ENCODE measurements at regions of chr3 and their contacts with region 1.

Region 1: DNA sequence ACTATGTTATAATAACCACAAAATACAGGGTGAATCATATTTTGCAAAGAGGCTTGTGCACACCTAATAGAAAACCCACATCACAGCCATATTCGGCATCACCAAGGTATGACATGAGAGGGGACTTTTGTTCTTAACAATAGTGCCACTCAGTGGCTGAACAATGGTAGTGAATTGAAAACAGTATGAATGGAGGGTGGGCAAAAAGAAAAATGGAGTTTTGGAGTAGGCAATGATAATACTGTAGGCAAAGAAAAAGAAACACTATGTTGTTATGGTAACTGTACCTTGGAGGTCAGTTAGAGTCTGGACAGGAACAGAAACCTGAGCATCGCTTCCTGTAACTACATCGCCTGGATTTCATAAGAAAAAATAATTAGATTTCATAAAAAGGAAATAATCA is 348.6 kb downstream of the PLCL2 start:
- DNase-seq: peak; percentile 43
- ATAC-seq: peak; percentile 99
- H3K4me3 Mint-ChIP-seq: no peak overlapping the region
- H3K27ac Mint-ChIP-seq: no peak overlapping the region
- H3K4me1 Mint-ChIP-seq: peaks cover 28% of the 10 kb centered on the region
- H3K27me3 Mint-ChIP-seq: no peaks in the 10 kb centered on the region
- CTCF ChIP-seq: peak; percentile 78

Region 2: DNA sequence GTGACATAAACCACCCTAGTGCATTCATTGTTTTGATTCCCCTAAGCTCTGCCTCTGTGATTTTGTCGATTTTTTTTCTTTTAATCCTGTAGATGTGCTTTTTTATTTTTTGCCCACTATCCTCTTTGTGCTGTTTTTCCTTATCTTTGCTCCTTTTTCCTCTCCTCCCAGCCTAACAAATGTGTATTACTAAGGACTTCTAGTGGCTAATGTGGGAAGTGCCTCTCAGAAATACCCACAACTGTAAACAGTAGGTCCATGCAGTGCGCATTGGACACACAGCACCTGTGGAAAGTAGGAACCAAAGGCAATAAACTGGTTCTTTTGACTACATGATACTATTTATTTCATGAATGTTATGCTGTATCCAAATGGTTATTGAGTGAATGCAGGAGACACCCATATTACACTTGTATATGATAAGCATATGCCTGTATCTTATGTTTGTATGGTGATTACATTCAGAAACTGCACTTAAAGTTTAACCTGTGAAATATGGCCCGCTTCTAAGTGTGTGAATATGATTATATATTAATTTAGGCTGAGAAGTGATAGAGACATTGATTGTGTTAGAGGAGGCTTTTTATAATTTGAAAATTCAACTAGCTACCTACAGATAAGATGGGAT is 200.9 kb before region 1 on chr3:
- CTCF ChIA-PET with region 1: interaction called, 3 read pairs
- POLR2A ChIA-PET with region 1: no interaction called
- intact Hi-C with region 1: loop called (anchors 10 kb)
- DNase-seq: no peak
- ATAC-seq: peak; percentile 43
- H3K4me3 Mint-ChIP-seq: no peak overlapping the region
- H3K27ac Mint-ChIP-seq: no peak overlapping the region
- H3K4me1 Mint-ChIP-seq: peaks cover 75% of the 10 kb centered on the region
- H3K27me3 Mint-ChIP-seq: no peaks in the 10 kb centered on the region
- CTCF ChIP-seq: peak; percentile 54

Measured in activated CD8-positive, alpha-beta T cell treated with anti-CD3 and anti-CD28 coated beads for 36 hours (primary cell).